ENCODE measurements at regions of chr4 and their contacts with region 1.

Region 1: DNA sequence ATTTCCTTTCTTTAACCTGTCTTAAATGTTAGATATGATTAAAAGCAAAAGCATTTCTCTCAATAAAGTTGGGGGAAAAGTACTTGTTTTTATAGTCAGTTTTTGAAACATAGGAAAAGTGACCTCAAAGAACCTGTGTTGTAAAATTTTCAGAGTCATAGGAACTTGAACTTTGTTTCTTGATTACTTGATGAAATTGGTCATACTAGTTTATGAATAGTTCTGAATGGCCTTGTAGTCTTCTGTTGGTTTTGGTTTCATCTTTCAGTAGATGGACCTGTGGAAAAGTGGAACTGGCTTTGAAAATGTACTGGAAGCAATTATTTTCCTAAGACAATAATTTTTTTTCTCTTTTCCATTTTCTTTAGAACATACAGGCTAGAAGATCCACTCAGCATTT is 222.2 kb upstream of the NUDT6 start:
- DNase-seq: no peak
- ATAC-seq: no peak
- H3K4me3 ChIP-seq: no peak overlapping the region
- H3K27ac ChIP-seq: no peak overlapping the region
- H3K4me1 ChIP-seq: no peaks in the 10 kb centered on the region
- H3K27me3 ChIP-seq: no peaks in the 10 kb centered on the region
- CTCF ChIP-seq: no peak
- EP300 ChIP-seq: no peak
- POLR2A ChIP-seq: no peak
- RAD21 ChIP-seq: no peak

Region 2: GRCh38 chr4:122107680-122108079 is 1036.9 kb before region 1 on chr4:
- CTCF ChIA-PET with region 1: no interaction called
- POLR2A ChIA-PET with region 1: no interaction called
- RAD21 ChIA-PET with region 1: no interaction called
- SMC1A ChIA-PET with region 1: no interaction called
- in situ Hi-C with region 1: no loop called
- intact Hi-C with region 1: no loop called
- DNase-seq: no peak
- ATAC-seq: no peak
- H3K4me3 ChIP-seq: no peak overlapping the region
- H3K27ac ChIP-seq: no peak overlapping the region
- H3K4me1 ChIP-seq: no peaks in the 10 kb centered on the region
- H3K27me3 ChIP-seq: no peaks in the 10 kb centered on the region; a peak in 1 of 4 replicates
- CTCF ChIP-seq: no peak
- EP300 ChIP-seq: no peak
- POLR2A ChIP-seq: no peak
- RAD21 ChIP-seq: no peak

Region 3: DNA sequence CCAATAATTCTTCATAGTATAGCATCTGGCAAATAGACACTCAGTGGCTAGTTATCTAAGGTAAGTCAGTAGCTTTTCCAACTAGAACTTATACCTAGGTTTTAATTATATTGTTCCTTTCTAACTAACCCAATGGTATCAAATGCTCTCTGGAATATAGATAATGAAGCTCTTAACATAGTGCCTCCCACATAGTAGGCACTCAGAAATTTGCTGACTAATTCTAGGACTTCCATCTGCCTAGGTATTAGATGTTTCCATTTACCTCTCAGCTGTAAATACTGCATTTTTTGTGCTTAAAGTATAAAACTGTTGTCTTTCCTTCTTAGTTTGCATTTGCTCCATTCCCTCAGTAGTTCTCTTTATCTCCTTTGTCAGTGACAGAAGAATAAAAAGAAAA is 37.7 kb after region 1 on chr4:
- CTCF ChIA-PET with region 1: no interaction called
- POLR2A ChIA-PET with region 1: no interaction called
- RAD21 ChIA-PET with region 1: no interaction called
- SMC1A ChIA-PET with region 1: no interaction called
- in situ Hi-C with region 1: no loop called
- intact Hi-C with region 1: loop called (anchors 2 kb)
- DNase-seq: no peak
- ATAC-seq: no peak
- H3K4me3 ChIP-seq: no peak overlapping the region
- H3K27ac ChIP-seq: no peak overlapping the region
- H3K4me1 ChIP-seq: no peaks in the 10 kb centered on the region
- H3K27me3 ChIP-seq: no peaks in the 10 kb centered on the region
- CTCF ChIP-seq: no peak
- EP300 ChIP-seq: no peak
- POLR2A ChIP-seq: no peak
- RAD21 ChIP-seq: no peak

Region 4: DNA sequence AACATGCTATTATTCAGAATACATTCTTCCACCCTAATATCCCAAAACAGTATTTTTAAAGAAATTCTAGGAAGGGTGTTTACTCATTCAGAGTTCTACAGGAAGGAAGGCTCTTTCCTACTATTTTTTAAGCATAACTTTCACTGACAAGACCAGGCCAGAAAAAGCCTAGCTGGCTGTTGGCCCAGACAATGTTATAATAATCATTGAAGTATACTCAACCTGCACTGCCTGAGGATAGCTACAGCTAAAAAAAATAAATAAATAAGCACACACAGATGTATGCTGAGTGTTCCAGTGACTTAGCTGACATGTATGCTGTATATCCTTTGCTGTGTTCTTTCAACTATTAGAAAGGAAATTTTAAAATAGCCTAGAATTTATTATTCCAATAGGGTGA is 106.2 kb after region 1 on chr4:
- CTCF ChIA-PET with region 1: no interaction called
- POLR2A ChIA-PET with region 1: no interaction called
- RAD21 ChIA-PET with region 1: no interaction called
- SMC1A ChIA-PET with region 1: no interaction called
- in situ Hi-C with region 1: no loop called
- intact Hi-C with region 1: no loop called
- DNase-seq: no peak
- ATAC-seq: no peak
- H3K4me3 ChIP-seq: no peak overlapping the region
- H3K27ac ChIP-seq: no peak overlapping the region
- H3K4me1 ChIP-seq: no peaks in the 10 kb centered on the region
- H3K27me3 ChIP-seq: no peaks in the 10 kb centered on the region
- CTCF ChIP-seq: no peak
- EP300 ChIP-seq: no peak
- POLR2A ChIP-seq: no peak
- RAD21 ChIP-seq: no peak

Measured in GM12878 (cell line).